ENCODE measurements at regions of chr1 and their contacts with region 1.

Region 1: DNA sequence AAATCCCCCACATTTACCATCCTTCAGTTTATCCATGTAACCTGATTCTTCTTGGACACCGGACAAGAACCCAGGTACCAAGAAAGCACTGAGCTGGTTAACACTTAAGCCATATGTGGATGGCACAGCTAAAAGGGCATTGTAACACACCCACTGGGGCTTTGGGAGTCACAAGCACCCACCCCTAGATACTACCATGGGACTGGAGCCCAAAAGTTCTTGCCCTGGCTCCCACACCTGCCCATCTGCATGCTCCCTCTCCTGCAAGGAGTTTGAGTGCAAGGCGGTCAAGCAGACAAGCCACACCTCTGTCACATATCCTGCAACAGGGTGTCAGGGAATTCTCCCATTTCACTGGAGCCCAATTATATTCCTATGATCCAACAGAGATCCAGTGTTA is 270.1 kb downstream of the USH2A start:
- DNase-seq: no peak
- H3K4me3 ChIP-seq: no peak overlapping the region
- H3K27ac ChIP-seq: no peak overlapping the region
- H3K4me1 ChIP-seq: no peaks in the 10 kb centered on the region
- H3K27me3 ChIP-seq: no peaks in the 10 kb centered on the region
- CTCF ChIP-seq: no peak
- EP300 ChIP-seq: no peak
- POLR2A ChIP-seq: no peak

Region 2: GRCh38 chr1:216181590-216181989 is 28.5 kb after region 1 on chr1:
- in situ Hi-C with region 1: no loop called
- intact Hi-C with region 1: loop called (anchors 2 kb)
- DNase-seq: no peak
- H3K4me3 ChIP-seq: no peak overlapping the region
- H3K27ac ChIP-seq: no peak overlapping the region
- H3K4me1 ChIP-seq: peaks cover 0 to 6% (median 0%) of the 10 kb centered on the region in 4 donors
- H3K27me3 ChIP-seq: no peaks in the 10 kb centered on the region
- CTCF ChIP-seq: no peak
- EP300 ChIP-seq: no peak
- POLR2A ChIP-seq: no peak